ENCODE measurements at regions of chr9 and their contacts with region 1.

Region 1: GRCh38 chr9:21154018-21154608 is 12.3 kb downstream of the IFNA21 start:
- DNase-seq: peak in 4 of 5 donors; percentile 6 to 27 (median 22)
- H3K4me3 ChIP-seq: no peak overlapping the region
- H3K4me3 Mint-ChIP-seq: peak overlapping the region in 1 of 8 donors; percentile 59
- H3K27ac ChIP-seq: no peak overlapping the region
- H3K27ac Mint-ChIP-seq: peak overlapping the region in 2 of 7 donors; percentile 58 to 59
- H3K4me1 ChIP-seq: peaks cover 4% of the 10 kb centered on the region
- H3K4me1 Mint-ChIP-seq: peaks cover 4 to 9% (median 7%) of the 10 kb centered on the region in 4 donors
- H3K27me3 ChIP-seq: no peaks in the 10 kb centered on the region
- H3K27me3 Mint-ChIP-seq: peaks cover 0 to 1% of the 10 kb centered on the region in 2 donors

Region 2: DNA sequence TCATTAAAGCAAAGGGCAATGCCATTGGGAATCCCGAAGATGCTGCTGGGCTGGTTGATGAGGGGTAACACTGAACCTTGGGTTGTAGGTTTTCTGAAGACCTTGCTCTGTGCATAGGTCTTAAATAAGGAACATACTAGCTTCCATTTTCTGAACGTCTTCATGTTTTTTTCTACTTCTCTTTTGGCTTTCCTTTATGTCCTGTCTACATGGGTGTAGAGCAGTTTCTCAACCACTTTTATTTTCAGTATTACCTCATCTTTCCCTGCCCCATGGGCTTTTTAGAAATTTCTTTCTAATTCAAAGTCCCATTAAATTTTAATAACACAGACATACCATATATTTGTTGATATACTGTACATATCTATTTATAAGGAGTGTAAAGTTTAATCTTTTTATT is 85.8 kb after region 1 on chr9 and contains the start of gene IFNA14:
- CTCF ChIA-PET with region 1: interaction called, 5 read pairs
- POLR2A ChIA-PET with region 1: no interaction called
- intact Hi-C with region 1: loop called (anchors 10 kb)
- DNase-seq: no peak
- H3K4me3 ChIP-seq: no peak within 1 kb of the TSS
- H3K4me3 Mint-ChIP-seq: no peak within 1 kb of the TSS
- H3K27ac ChIP-seq: no peak within 1 kb of the TSS
- H3K27ac Mint-ChIP-seq: no peak within 1 kb of the TSS
- H3K4me1 ChIP-seq: peaks cover 5% of the 10 kb centered on the region
- H3K4me1 Mint-ChIP-seq: peaks cover 4 to 12% (median 7%) of the 10 kb centered on the region in 4 donors
- H3K27me3 ChIP-seq: no peaks in the 10 kb centered on the region
- H3K27me3 Mint-ChIP-seq: peaks cover 2 to 15% of the 10 kb centered on the region in 2 donors
- total RNA-seq, gene IFNA14: not detected

Region 3: DNA sequence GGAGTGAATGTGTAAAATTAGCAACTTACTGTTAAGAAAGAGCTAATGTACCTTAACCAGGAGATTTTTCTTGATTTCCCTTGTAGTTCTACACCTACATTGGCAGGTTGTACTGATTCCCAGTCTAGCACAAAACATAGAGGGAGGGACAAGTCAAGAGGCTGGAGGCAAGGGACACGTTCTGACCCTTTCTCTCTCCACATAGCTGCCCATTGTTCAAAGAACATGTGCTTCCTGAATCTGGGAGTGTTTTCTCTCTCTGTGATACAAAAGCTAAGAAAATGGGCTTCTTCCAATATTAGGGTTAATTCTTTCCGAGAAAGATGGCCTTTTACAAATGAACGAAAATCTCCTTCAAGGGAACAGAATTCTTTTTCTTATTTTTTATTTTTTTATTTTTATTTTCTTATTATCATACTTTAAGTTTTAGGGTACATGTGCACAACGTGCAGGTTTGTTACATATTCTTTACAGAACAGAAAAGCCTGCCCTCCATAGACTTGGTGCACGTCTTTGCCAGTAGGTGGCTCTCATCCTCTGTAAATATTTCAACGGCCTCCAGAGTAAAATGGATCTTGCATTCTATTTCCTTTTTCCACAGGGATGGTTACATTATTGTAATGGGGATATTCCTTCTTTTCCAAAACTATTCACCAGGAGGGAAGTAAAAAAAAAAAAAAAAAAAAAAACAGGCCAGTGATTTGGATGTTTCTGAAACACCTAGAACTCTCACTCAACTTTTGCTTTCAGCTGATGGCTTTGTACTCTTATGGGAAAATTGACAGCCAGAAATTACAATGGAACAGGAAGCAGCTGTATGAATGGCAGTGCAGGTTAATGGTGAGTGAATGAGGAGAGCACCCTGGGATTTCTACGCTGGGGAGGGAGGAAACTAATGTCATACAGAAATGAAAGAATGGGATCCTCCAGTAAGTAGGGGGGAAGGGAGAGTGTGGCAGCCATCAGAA is 164.1 kb after region 1 on chr9:
- CTCF ChIA-PET with region 1: no interaction called
- POLR2A ChIA-PET with region 1: no interaction called
- intact Hi-C with region 1: loop called (anchors 2 kb)
- DNase-seq: peak; percentile 17 to 40 (median 33)
- H3K4me3 ChIP-seq: no peak overlapping the region
- H3K4me3 Mint-ChIP-seq: no peak overlapping the region
- H3K27ac ChIP-seq: no peak overlapping the region
- H3K27ac Mint-ChIP-seq: peak overlapping the region in 6 of 7 donors; percentile 17 to 87 (median 70)
- H3K4me1 ChIP-seq: no peaks in the 10 kb centered on the region
- H3K4me1 Mint-ChIP-seq: peaks cover 0 to 5% (median 3%) of the 10 kb centered on the region in 4 donors
- H3K27me3 ChIP-seq: no peaks in the 10 kb centered on the region
- H3K27me3 Mint-ChIP-seq: no peaks in the 10 kb centered on the region

Measured in CD4-positive, alpha-beta memory T cell (primary cell).